Ascending aorta (tissue), 2 donors: ENCODE measurements at regions of chr11 and their contacts with region 1.

Region 1: DNA sequence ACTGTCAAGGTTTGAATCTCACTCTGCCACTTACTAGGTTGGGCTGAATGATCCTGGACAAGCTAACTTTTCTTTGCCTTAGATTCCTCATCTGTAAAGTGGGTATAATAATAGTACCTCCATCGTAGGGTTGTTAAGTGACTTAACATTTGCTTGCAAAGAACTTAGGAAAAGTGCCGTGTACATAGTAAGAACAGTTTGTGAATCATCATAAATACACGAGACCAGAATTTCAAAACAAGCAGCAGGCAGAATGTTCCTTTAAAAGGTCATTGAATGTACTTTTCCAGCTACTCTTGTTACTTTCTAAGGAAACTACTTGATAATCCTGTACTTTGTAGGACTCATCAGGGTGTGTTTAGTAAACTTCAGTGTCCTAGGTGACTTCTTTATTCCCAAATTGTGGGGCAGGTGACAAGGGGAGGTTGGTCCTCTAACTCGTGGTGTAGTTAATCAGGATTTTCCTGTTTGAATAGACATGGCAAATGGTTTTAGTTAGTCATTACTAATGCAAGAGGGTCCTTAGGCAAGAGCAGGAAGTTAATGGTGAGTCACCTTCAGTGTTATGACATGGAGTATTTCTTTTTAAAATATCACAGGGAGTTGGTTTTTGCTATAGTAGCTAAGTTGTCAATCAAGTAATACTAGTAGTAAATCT is 67.9 kb downstream of the YAP1 start:
- DNase-seq: no peak
- H3K4me3 ChIP-seq: peak overlapping the region in 1 of 2 donors; percentile 24
- H3K27ac ChIP-seq: peak overlapping the region; percentile 88
- H3K4me1 ChIP-seq: peaks cover 0 to 19% of the 10 kb centered on the region in 2 donors
- H3K27me3 ChIP-seq: no peaks in the 10 kb centered on the region
- CTCF ChIP-seq: no peak

Region 2: DNA sequence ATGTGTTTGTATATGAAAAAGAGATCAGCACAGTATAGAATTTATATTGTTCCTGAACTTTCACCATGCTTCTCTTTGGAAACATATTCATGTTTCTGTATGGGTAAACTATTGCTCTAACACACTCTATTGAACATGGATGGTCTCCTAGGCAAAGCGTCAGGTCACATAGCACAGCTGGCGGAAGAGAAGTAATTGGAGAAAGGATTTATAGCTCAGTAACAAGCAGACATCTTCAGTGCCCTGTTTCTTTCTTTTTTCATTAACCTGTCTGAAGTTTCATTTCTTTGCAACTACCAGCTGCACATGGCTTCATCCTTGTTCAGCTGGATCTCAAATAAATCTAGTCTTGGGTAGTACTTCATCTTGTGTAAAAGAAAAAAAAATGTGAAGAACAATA is 509.9 kb before region 1 on chr11:
- intact Hi-C with region 1: no loop called
- DNase-seq: no peak
- H3K4me3 ChIP-seq: no peak overlapping the region
- H3K27ac ChIP-seq: no peak overlapping the region
- H3K4me1 ChIP-seq: no peaks in the 10 kb centered on the region
- H3K27me3 ChIP-seq: no peaks in the 10 kb centered on the region
- CTCF ChIP-seq: no peak

Region 3: DNA sequence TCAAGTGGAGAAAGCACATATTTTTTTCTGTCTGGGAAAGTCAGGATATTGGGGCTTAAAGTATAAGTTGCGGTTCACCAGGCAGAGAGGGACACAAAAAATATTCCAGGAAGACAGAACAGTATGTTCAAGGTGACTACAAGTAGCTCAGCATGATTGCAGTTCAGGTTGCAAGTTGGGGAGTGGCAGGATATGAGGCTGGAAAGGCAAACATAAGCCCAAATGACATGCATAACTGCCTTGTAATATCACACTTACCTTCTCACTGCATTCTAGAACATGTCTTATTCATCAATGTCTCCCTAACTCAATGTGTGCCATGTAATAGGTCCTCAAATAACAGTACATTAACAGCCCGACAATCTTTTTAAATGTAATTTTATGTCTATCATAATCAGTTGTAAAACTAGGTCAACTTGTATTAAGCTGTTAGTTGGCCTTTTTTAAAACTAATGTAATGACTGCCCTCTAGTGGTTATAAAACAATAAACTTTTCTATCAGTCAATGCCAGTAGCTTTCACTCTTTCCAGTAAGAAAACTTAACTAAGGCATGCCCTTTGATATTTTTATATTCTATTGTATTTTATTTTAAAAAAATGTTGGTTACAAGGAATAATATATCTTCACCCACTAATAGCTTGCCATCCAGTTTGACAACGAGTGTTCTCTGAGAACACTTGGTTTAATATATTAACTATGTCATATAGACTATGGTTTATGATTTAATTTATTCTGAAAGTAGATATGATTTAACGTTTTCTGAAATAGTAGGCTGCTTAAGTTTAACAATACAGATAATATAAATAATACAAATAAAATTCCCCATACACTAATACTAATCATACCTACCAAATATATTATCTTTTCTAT is 170.3 kb before region 1 on chr11:
- intact Hi-C with region 1: no loop called
- DNase-seq: no peak
- H3K4me3 ChIP-seq: no peak overlapping the region
- H3K27ac ChIP-seq: no peak overlapping the region
- H3K4me1 ChIP-seq: peaks cover 0 to 9% of the 10 kb centered on the region in 2 donors
- H3K27me3 ChIP-seq: no peaks in the 10 kb centered on the region
- CTCF ChIP-seq: peak in 2 of 3 experiments; percentile 43 to 56

Region 4: GRCh38 chr11:102139081-102139498 is 39.0 kb before region 1 on chr11:
- intact Hi-C with region 1: loop called (anchors 2 kb)
- DNase-seq: peak; percentile 17 to 85
- H3K4me3 ChIP-seq: peak overlapping the region in 1 of 2 donors; percentile 26
- H3K27ac ChIP-seq: peak overlapping the region; percentile 82 to 92
- H3K4me1 ChIP-seq: peaks cover 4 to 41% of the 10 kb centered on the region in 2 donors
- H3K27me3 ChIP-seq: no peaks in the 10 kb centered on the region
- CTCF ChIP-seq: no peak

Region 5: GRCh38 chr11:102192349-102193066 is 14.4 kb after region 1 on chr11:
- intact Hi-C with region 1: loop called (anchors 2 kb)
- DNase-seq: no peak
- H3K4me3 ChIP-seq: no peak overlapping the region
- H3K27ac ChIP-seq: peak overlapping the region in 1 of 2 donors; percentile 11
- H3K4me1 ChIP-seq: peaks cover 6 to 42% of the 10 kb centered on the region in 2 donors
- H3K27me3 ChIP-seq: no peaks in the 10 kb centered on the region
- CTCF ChIP-seq: no peak